Activated CD4-positive, alpha-beta T cell treated with anti-CD3 and anti-CD28 coated beads, Interleukin-2, amount 10 ng/mL, durations not matched to agents 24 days and 14 days (primary cell): ENCODE measurements at regions of chr5 and their contacts with region 1.

Region 1: DNA sequence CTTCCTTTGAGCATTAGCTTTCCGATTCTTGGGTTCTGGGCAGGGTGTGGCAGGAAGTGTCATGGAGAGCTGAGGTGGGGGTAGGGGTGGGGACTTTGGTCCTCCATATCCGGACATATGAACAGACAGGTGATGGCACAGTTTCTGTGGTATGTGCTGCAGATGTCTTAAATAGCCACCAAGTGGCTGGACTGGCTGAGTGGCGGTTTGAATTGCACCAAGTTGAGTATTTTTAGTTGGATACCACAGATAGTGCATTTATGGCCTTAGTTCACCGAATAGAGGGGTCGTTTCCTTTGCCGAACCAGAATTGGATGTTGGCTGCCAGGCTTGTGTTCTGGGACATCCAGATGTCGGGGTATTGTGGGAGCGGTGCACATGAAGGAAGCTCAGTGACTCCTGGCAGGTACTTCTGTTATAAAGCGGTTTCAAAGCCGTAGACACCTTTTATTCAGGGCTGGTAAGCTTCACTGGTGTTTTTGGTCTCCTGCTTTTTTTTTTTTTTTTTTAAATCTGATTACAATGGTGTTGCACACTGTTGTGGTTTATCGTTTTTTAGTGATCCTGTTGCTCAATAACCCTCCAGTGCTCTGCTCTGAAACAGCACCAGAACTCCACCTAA is 15.1 kb upstream of the TNFAIP8 start:
- DNase-seq: peak; percentile 90
- H3K4me3 Mint-ChIP-seq: peak overlapping the region; percentile 82
- H3K27ac Mint-ChIP-seq: peak overlapping the region; percentile 92
- H3K4me1 Mint-ChIP-seq: peaks cover 82% of the 10 kb centered on the region
- H3K27me3 Mint-ChIP-seq: no peaks in the 10 kb centered on the region

Region 2: GRCh38 chr5:118987988-118988865 is 352.5 kb before region 1 on chr5 and contains the start of gene DTWD2:
- intact Hi-C with region 1: loop called (anchors 5 kb)
- DNase-seq: peak; percentile 97
- H3K4me3 Mint-ChIP-seq: peak within 1 kb of the TSS; percentile 83
- H3K27ac Mint-ChIP-seq: peak within 1 kb of the TSS; percentile 57
- H3K4me1 Mint-ChIP-seq: peaks cover 12% of the 10 kb centered on the region
- H3K27me3 Mint-ChIP-seq: peaks cover 2% of the 10 kb centered on the region
- total RNA-seq, gene DTWD2: 1.8 and 2.2 TPM in 2 replicates

Region 3: GRCh38 chr5:119079318-119079921 is 261.3 kb before region 1 on chr5:
- intact Hi-C with region 1: loop called (anchors 1 kb)
- DNase-seq: peak; percentile 77
- H3K4me3 Mint-ChIP-seq: peak overlapping the region; percentile 65
- H3K27ac Mint-ChIP-seq: peak overlapping the region; percentile 86
- H3K4me1 Mint-ChIP-seq: peaks cover 33% of the 10 kb centered on the region
- H3K27me3 Mint-ChIP-seq: no peaks in the 10 kb centered on the region

Region 4: GRCh38 chr5:119309326-119309725 is 31.4 kb before region 1 on chr5:
- intact Hi-C with region 1: loop called (anchors 1 kb)
- DNase-seq: no peak
- H3K4me3 Mint-ChIP-seq: peak overlapping the region; percentile 76
- H3K27ac Mint-ChIP-seq: peak overlapping the region; percentile 94
- H3K4me1 Mint-ChIP-seq: peaks cover 79% of the 10 kb centered on the region
- H3K27me3 Mint-ChIP-seq: no peaks in the 10 kb centered on the region

Region 5: GRCh38 chr5:119355685-119356611 is 15.2 kb after region 1 on chr5 and contains the start of gene TNFAIP8:
- intact Hi-C with region 1: loop called (anchors 1 kb)
- DNase-seq: peak; percentile 88
- H3K4me3 Mint-ChIP-seq: peak within 1 kb of the TSS; percentile 100
- H3K27ac Mint-ChIP-seq: peak within 1 kb of the TSS; percentile 97
- H3K4me1 Mint-ChIP-seq: peaks cover 61% of the 10 kb centered on the region
- H3K27me3 Mint-ChIP-seq: no peaks in the 10 kb centered on the region
- total RNA-seq, gene TNFAIP8: 188 and 193 TPM in 2 replicates

Region 6: GRCh38 chr5:119411935-119412602 is 71.4 kb after region 1 on chr5:
- intact Hi-C with region 1: loop called (anchors 2 kb)
- DNase-seq: peak; percentile 87
- H3K4me3 Mint-ChIP-seq: peak overlapping the region; percentile 85
- H3K27ac Mint-ChIP-seq: peak overlapping the region; percentile 70
- H3K4me1 Mint-ChIP-seq: peaks cover 32% of the 10 kb centered on the region
- H3K27me3 Mint-ChIP-seq: peaks cover 10% of the 10 kb centered on the region